ENCODE measurements at regions of chr10 and their contacts with region 1.

Region 1: GRCh38 chr10:104209575-104210198 is 22.5 kb downstream of the CFAP43 start:
- DNase-seq: peak; percentile 40 to 52
- H3K4me3 ChIP-seq: no peak overlapping the region
- H3K4me1 ChIP-seq: no peaks in the 10 kb centered on the region
- H3K27me3 ChIP-seq: peaks cover 38% of the 10 kb centered on the region

Region 2: DNA sequence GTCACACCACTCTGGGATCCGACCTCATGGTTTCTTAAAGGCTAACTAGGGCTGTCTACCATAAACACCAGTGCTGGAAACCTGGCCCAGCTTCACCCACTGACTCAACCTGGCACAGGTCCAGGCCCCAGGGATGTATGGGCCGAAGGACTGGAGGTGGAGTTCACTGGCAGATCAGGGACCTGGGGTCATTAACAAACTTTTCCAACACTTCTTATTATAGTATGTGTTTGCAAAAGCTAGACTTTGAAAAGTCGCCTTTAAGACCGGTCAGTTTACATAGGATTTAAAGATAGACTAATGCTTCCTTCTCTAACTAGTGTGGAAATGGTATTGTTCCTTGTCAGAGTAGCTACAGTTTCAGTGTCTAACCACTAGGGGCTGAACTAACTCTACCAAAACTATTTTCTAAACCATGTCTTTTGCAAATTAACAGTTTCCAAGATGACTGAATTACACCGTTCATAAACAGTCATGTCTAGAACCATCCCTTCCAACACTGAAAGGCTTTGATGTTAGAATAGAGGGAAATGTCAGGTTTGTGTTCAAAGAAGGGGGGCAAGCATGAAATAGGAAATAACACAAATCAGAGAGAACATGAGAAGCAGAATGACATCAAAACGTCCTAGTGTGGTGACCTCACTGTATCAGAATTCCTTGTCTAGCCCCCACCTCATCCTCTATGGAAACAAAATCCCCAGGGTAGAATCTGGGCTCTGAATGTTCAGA is 321.4 kb before region 1 on chr10:
- in situ Hi-C with region 1: loop called (anchors 10 kb)
- DNase-seq: peak; percentile 22 to 64
- H3K4me3 ChIP-seq: no peak overlapping the region
- H3K4me1 ChIP-seq: no peaks in the 10 kb centered on the region
- H3K27me3 ChIP-seq: no peaks in the 10 kb centered on the region